GM10248 (cell line): ENCODE measurements at regions of chr9 and their contacts with region 1.

Region 1: DNA sequence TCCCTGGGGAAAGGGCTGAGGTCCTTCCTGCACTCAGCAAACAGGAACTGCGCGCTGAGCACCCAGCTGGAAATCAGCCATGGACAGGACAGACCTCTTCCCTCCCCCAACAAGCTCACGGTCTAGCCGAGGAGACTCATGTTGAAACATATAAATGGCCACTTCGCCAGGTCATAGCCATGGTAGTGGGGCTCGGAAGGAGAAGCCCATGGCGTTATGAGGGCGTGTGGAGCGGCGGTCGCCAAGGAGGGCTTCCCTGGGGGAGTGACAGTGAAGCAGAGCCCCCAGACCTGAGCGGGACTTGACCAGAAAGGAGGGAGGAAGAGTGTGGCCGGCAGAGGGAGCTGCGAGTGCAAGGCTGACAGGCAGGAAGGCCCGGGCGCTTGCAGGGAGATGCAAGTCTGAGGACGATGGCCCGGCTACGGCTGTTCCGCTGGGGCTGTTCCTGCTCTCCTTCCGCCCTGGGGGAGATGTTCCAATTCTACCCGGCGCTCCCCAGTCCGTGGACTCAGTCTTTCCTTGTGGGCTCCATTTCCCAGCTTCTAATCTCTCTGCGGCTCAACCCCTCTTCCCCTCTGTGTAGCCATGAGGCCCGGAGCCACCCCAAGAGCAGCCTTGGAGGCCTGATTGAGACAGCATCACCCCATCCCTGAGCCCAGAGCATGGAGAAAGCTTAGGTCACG is 43.9 kb upstream of the PRRC2B start:
- DNase-seq: peak; percentile 92
- CTCF ChIP-seq: peak; percentile 90

Region 2: DNA sequence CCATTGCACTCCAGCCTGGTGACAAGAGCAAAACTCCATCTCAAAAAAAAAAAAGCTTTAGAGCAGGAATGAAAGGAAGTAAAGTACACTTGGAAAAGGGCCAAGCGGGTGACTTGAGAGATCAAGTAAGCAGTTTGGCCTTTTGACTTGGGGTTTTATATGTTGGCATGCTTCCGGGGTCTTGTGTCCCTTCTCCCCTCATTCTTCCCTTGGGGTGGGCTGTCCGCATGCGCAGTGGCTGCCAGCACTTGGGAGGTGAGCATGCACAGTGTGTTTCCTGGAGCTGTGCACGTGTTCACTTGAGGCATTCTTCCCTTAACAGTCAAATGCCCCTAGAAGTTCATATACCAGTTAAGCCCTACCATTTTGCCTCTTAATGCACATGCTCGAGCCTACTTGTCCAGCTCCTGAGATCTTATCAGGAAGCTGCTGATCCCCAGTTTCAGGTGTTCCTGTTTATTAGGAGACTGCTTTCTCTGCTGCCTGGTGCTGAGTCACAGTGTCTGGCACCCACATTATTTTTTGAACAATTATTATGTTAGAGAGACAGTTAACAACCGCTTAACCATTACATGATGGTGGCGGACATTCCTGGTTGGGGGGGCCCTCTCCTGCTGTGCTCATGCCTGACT is 11.3 kb after region 1 on chr9:
- CTCF ChIA-PET with region 1: interaction called, 22 read pairs
- POLR2A ChIA-PET with region 1: no interaction called
- DNase-seq: no peak
- CTCF ChIP-seq: no peak

Region 3: GRCh38 chr9:131366761-131367401 is 16.9 kb after region 1 on chr9:
- CTCF ChIA-PET with region 1: interaction called, 16 read pairs
- POLR2A ChIA-PET with region 1: no interaction called
- DNase-seq: no peak
- CTCF ChIP-seq: peak; percentile 25

Region 4: DNA sequence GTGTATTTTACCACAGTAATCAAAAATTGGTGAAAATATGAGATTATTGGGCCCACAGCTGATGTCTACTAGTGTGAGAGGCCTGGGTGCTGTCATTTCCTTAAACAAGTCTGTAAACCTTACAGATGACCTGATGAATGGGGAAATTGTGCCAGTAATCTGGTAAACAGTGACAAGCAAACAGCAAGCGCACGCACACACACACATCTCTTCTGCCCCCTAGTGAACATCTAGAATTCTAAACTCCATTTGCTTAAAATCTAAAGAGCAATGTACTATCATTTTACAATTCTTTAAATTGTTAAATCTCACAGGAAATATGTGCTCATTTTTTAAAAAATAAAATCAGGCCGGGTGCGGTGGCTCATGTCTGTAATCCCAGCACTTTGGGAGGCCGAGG is 397.3 kb after region 1 on chr9:
- CTCF ChIA-PET with region 1: interaction called, 41 read pairs
- POLR2A ChIA-PET with region 1: no interaction called
- DNase-seq: no peak
- CTCF ChIP-seq: peak; percentile 57